Dendritic cell treated with granulocyte-macrophage colony-stimulating factor and Interleukin-4, amounts not matched to agents 40 ng/mL and 50 ng/mL, for 4 days (primary cell): ENCODE measurements at regions of chr11 and their contacts with region 1.

Region 1: DNA sequence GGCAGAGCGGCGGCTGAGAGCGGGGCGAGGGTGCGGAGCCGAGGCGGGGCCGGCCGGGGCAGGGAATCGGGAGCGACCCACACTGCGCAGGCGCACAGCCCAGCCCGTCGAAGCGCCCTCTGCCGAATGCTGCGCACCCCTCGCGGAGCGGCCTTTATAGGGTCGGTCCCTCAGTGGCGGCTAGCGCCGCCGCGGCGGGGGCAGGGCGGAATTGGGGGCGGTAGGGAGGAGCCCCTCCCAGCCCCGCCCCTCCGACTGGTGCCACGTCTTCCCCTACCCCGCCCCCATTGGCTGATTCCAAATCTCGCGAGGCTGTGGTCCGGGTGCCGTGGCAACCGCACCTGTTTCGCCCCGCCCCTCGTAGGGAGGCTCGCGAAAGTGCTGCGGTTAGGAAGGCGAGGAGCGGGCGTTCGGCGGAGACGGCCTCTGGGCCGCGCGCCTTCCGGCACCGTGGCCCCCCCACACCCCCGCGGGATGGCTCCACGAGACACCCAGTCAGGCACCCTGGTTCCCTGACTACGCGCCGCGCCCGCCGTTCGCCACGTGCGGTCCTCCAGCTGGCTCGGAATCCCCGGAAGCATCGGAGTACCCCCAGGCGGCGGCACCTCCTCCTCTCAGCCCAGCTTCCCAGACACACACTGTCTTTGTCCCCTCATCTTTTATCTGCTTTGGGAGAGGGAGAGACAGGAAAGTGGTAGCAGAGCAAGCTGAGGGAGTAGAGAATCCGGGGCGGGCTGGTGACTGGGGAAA is at the start of gene EHD1:
- H3K4me3 Mint-ChIP-seq: peak within 1 kb of the TSS; percentile 75
- H3K27ac Mint-ChIP-seq: peak within 1 kb of the TSS; percentile 90
- H3K4me1 Mint-ChIP-seq: peaks cover 78% of the 10 kb centered on the region
- H3K27me3 Mint-ChIP-seq: peaks cover 32% of the 10 kb centered on the region

Region 2: GRCh38 chr11:64859542-64860414 is 18.9 kb before region 1 on chr11:
- intact Hi-C with region 1: loop called (anchors 2 kb)
- H3K4me3 Mint-ChIP-seq: peak overlapping the region; percentile 32
- H3K27ac Mint-ChIP-seq: peak overlapping the region; percentile 67
- H3K4me1 Mint-ChIP-seq: peaks cover 86% of the 10 kb centered on the region
- H3K27me3 Mint-ChIP-seq: peaks cover 13% of the 10 kb centered on the region

Region 3: DNA sequence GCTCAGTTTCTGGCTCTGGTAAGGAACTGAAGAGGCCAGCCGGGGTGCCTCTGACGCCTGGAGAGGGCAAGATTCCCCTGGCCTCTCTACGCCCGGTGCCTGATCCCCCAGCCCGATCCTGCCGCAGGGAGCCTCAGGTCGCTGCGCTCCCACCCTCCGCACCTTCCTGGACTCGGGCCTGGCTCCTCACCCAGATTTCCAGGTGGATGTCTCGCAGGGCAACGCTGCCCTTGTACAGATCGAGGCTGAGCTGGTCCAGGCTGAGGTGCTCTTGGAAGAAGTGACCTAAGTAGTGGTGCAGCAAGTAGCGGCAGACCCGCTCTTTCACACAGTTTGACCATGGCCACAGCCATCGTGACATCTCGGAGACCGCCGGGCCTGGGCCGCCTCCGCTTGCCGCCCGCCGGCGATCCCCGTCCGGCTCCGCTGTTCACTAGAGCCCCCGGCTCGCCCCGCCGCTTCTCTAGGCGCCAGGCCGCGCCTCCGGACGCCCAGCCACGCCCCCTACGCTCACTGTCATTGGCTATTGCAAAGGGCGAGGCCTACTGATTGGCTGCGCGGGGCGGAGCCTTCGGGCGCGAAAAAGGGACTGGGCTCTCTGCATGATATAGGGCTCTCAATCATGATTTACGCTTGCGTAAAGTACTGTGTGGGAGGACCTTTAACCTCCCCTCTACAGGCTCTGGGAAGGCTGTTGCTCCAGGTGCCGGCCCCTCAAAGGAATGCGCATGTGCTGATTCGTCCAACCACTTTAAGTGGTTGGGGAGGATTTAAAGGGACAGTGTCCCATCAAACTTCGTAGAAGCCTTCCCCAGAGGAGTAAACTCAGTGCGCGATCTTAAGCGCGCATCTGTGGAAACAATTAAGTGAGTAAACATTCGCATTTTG is 38.4 kb after region 1 on chr11 and contains the start of gene ATG2A:
- intact Hi-C with region 1: loop called (anchors 1 kb)
- H3K4me3 Mint-ChIP-seq: peak within 1 kb of the TSS; percentile 92
- H3K27ac Mint-ChIP-seq: peak within 1 kb of the TSS; percentile 84
- H3K4me1 Mint-ChIP-seq: peaks cover 27% of the 10 kb centered on the region
- H3K27me3 Mint-ChIP-seq: no peaks in the 10 kb centered on the region

Region 4: GRCh38 chr11:65117216-65118096 is 238.8 kb after region 1 on chr11 and contains the start of gene ZNHIT2:
- intact Hi-C with region 1: no loop called
- H3K4me3 Mint-ChIP-seq: peak within 1 kb of the TSS; percentile 84
- H3K27ac Mint-ChIP-seq: peak within 1 kb of the TSS; percentile 99
- H3K4me1 Mint-ChIP-seq: peaks cover 60% of the 10 kb centered on the region
- H3K27me3 Mint-ChIP-seq: peaks cover 21% of the 10 kb centered on the region